ENCODE measurements at regions of chr4 and their contacts with region 1.

Region 1: DNA sequence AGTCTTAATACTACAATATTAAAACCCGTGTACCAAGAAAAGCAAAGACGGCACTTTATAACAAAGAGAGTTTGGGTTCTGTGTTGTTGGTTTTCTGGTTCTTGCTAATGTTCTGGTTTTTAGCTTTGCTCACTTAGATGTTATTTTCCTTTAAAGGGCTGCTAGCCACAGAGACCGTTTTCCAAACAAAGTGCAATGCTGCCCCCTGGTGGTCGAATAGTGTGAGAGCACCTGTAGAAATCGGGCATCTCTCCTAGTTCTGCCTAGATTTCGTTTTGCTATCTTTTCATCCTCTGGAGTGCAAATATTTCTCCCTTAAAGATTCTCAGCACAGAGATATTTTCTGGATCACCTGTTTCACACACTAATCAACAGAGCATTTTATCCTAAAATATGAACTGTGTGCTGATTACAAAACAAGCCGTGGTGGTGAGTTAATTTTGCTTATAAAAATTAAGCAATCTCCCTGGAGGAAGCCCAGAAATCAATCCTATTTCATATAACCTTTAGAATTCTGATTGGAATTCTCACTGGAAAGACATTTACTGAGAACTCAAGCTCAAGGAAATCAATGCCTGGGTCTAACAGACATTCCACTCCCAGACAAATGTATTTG is 334.5 kb upstream of the NOCT start:
- DNase-seq: peak; percentile 84
- ATAC-seq: peak; percentile 68 to 72

Region 2: DNA sequence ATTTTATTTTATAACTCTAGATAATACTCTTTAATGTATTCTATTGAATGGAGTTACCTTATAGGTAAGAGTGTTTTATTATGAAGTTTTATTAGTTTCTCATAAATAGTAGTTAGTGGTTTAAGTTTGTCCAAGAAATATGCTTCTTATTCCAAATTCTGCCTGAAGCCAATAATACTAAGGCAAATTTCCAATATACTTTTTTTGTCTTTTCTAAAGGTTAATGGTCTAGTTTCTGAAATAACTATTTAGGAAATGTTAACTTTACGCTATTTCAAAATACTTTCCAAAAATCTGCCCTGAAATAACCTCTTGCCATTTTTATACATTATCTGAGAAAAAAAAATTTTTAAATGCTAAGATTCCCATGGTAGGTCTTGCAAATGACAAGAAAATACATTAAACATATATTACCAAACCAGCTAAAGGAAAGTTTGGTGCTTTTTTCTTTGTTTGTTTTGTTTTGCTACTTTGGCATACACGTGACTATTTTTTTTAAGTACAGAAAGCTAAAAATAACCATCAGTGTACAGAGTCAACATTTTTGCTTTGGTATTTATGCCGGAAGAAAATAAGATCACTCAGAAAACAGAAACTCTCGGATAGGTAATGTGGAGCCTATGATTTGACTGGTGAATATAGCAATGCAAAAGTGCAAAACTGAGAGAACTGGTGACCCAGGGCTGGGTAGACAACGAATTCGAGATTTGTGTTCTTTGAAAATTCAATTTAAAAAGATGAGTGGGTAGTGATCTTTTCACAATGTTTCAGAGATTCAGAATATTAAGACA is 1178.6 kb before region 1 on chr4:
- intact Hi-C with region 1: no loop called
- DNase-seq: no peak
- ATAC-seq: no peak

Region 3: GRCh38 chr4:138090150-138090917 is 590.8 kb before region 1 on chr4:
- intact Hi-C with region 1: loop called in 1 of 2 experiments (anchors 5 kb)
- DNase-seq: no peak
- ATAC-seq: peak; percentile 67 to 87